Caco-2 (cell line): ENCODE measurements at regions of chr3 and their contacts with region 1.

Region 1: GRCh38 chr3:27312044-27312668 is 57.0 kb downstream of the NEK10 start:
- DNase-seq: peak in 1 of 2 experiments; percentile 59
- H3K4me3 ChIP-seq: no peak overlapping the region
- H3K4me3 Mint-ChIP-seq: no peak overlapping the region
- H3K27ac Mint-ChIP-seq: no peak overlapping the region
- H3K4me1 ChIP-seq: peaks cover 3% of the 10 kb centered on the region; the same call in 1 of the 2 replicates
- H3K4me1 Mint-ChIP-seq: peaks cover 8% of the 10 kb centered on the region
- H3K27me3 ChIP-seq: no peaks in the 10 kb centered on the region
- H3K27me3 Mint-ChIP-seq: peaks cover 2% of the 10 kb centered on the region
- CTCF ChIP-seq: peak; percentile 45 to 64

Region 2: DNA sequence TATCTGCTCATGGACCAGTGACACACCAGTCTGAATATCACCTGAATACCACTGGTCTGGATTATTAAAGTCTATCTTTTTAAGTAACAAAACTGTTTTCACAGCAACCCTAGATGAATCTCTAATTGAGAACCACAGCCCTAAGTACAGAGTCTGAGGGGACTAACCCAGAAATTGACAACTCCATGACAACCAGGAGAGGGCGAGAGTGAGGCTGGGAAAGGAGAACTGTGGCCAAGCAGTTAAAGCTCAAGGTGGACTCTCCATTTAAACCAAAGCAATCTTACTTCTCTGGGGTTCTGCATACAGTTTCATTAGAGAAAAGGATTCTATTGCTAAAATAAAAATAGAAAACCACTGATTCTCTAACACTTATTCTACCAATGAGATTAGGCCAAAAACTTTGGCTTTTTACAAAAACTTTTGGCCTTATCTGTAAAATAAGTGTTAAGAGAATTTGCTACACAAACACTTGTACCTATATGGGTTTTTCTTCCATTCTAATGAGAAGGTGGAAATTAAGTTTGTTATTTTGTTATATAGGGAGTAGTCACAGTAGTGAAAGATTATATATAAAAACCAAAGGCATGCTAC is 45.6 kb after region 1 on chr3:
- CTCF ChIA-PET with region 1: no interaction called
- POLR2A ChIA-PET with region 1: no interaction called
- intact Hi-C with region 1: loop called (anchors 1 kb)
- DNase-seq: peak; percentile 49 to 64
- H3K4me3 ChIP-seq: no peak overlapping the region
- H3K4me3 Mint-ChIP-seq: no peak overlapping the region
- H3K27ac Mint-ChIP-seq: no peak overlapping the region
- H3K4me1 ChIP-seq: no peaks in the 10 kb centered on the region
- H3K4me1 Mint-ChIP-seq: no peaks in the 10 kb centered on the region
- H3K27me3 ChIP-seq: no peaks in the 10 kb centered on the region
- H3K27me3 Mint-ChIP-seq: peaks cover 10% of the 10 kb centered on the region
- CTCF ChIP-seq: peak in 1 of 2 experiments; percentile 73